ENCODE measurements at regions of chr3 and their contacts with region 1.

Region 1: GRCh38 chr3:16177962-16178627 is 3.6 kb downstream of the GALNT15 start:
- DNase-seq: peak; percentile 49 to 73
- ATAC-seq: peak; percentile 68 to 90 (median 69)
- H3K4me3 ChIP-seq: no peak overlapping the region
- H3K4me3 Mint-ChIP-seq: no peak overlapping the region
- H3K27ac ChIP-seq: no peak overlapping the region
- H3K27ac Mint-ChIP-seq: no peak overlapping the region
- H3K4me1 ChIP-seq: peaks cover 5% of the 10 kb centered on the region
- H3K4me1 Mint-ChIP-seq: peaks cover 6 to 9% of the 10 kb centered on the region in 2 donors
- H3K27me3 ChIP-seq: no peaks in the 10 kb centered on the region
- H3K27me3 Mint-ChIP-seq: peaks cover 0 to 11% of the 10 kb centered on the region in 2 donors
- CTCF ChIP-seq: peak; percentile 74

Region 2: DNA sequence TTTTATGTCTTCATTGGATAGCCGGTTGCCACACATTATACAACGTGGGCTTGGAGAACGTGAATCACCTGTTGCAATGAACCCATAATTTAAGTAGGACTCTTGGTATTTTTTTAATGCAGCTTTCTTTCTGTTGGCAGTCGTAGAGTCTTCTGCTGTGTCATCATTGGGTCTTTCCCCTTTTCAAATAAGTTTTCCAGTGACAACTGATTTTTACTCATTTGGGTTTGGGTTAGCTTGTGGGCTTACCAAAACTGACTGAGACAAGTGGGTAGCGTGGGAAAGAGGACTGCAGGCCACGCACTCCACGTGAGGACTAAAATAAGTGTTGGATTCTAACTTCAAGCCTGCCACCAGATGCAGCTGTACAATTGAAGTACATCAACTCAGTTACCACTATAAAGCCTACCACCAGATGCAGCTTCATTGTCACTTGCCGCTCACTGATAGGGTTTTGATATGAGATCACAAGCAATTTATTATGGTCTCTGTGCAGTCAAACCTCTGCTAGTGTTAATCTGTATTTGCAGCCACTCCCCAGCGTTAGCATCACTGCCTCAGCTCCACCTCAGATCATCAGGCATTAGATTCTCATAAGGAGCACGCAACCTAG is 978.5 kb before region 1 on chr3:
- intact Hi-C with region 1: loop called (anchors 10 kb)
- DNase-seq: no peak
- ATAC-seq: no peak
- H3K4me3 ChIP-seq: no peak overlapping the region
- H3K4me3 Mint-ChIP-seq: no peak overlapping the region
- H3K27ac ChIP-seq: no peak overlapping the region
- H3K27ac Mint-ChIP-seq: no peak overlapping the region
- H3K4me1 ChIP-seq: peaks cover 3% of the 10 kb centered on the region
- H3K4me1 Mint-ChIP-seq: peaks cover 5 to 10% of the 10 kb centered on the region in 2 donors
- H3K27me3 ChIP-seq: no peaks in the 10 kb centered on the region
- H3K27me3 Mint-ChIP-seq: peaks cover under 1 to 15% of the 10 kb centered on the region in 2 donors
- CTCF ChIP-seq: no peak